Panc1 (cell line): ENCODE measurements at regions of chr19 and their contacts with region 1.

Region 1: DNA sequence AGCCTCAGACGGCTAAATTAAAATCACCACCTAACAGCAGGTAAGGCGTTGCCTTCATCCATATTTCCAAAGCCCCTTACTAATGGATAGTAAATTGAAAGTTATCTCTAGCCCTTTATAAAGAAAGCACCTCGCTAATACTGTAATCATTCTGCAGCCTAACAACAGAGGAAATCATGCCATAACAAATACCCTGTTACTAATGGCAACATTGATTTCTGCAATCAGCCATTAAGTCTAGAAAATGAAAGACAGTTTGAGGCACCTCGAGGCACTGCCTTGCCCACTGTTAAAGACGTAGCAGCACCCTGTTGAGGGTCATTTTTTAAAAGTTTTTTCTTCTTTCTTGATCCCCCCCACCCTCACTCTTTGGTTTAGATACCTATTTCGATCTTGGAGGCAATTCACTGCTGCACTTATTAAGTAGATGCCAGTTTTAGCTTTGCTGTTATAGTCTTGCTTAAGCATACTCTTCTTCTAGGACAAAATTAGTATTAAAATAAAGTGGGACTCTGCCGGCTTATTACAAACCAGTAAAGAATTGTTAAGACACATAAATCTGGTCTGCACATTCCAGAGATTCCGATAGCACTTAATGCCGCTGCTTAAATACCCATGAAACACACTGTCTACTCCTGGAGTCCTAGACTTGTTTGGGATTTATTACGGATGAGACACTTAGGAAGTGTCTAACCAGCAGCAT is 74.8 kb downstream of the ZNF536 start:
- DNase-seq: no peak
- ATAC-seq: no peak
- H3K4me3 ChIP-seq: no peak overlapping the region
- H3K27ac ChIP-seq: no peak overlapping the region
- H3K4me1 ChIP-seq: no peaks in the 10 kb centered on the region
- H3K27me3 ChIP-seq: peaks cover 31% of the 10 kb centered on the region
- CTCF ChIP-seq: no peak

Region 2: DNA sequence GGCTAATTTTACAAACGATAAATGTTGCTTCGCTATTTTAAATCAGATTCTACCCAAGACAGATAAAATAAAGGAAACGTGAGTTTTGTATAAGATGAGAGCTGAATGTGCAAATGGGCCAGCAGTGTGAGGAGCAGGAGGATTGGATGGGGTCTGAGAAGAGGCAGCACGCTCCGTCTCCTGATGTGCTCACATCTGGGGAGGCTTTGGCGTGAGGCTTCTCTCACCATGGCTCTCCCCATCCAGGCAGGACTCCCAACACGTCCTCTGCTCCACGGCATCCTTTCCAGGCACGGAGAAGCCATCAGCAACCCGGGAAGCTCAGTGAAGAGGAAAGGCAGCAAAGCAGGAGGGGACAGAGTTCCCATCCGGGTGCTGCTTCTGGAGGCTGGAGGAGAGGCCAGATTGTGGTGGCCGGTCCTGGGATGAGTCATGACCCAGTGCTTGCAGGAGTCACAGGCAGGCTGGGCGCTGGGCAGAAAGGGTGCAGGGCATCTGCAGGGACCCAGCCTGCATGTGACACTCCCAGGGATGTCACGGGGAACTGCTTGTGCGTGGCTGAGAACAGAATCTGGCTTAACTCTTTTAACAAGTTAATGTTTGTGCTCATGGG is 27.3 kb before region 1 on chr19:
- CTCF ChIA-PET with region 1: no interaction called
- POLR2A ChIA-PET with region 1: no interaction called
- in situ Hi-C with region 1: no loop called
- intact Hi-C with region 1: no loop called
- DNase-seq: no peak
- ATAC-seq: 0 out of 2 replicates have a peak, but pooled peaks have one; percentile 53
- H3K4me3 ChIP-seq: no peak overlapping the region
- H3K27ac ChIP-seq: no peak overlapping the region
- H3K4me1 ChIP-seq: no peaks in the 10 kb centered on the region
- H3K27me3 ChIP-seq: peaks cover 6% of the 10 kb centered on the region; the same call in 1 of the 2 replicates
- CTCF ChIP-seq: no peak

Region 3: GRCh38 chr19:30457484-30457883 is 10.5 kb after region 1 on chr19:
- CTCF ChIA-PET with region 1: no interaction called
- POLR2A ChIA-PET with region 1: interaction called, 14 read pairs
- in situ Hi-C with region 1: no loop called
- intact Hi-C with region 1: no loop called
- DNase-seq: no peak
- ATAC-seq: no peak
- H3K4me3 ChIP-seq: no peak overlapping the region
- H3K27ac ChIP-seq: no peak overlapping the region
- H3K4me1 ChIP-seq: no peaks in the 10 kb centered on the region
- H3K27me3 ChIP-seq: peaks cover 5% of the 10 kb centered on the region; the same call in 1 of the 2 replicates
- CTCF ChIP-seq: no peak